Activated naive CD4-positive, alpha-beta T cell treated with anti-CD3 and anti-CD28 coated beads for 36 hours (primary cell): ENCODE measurements at regions of chr10 and their contacts with region 1.

Region 1: GRCh38 chr10:84139126-84140035 is at the start of gene GHITM:
- DNase-seq: peak; percentile 100
- H3K4me3 Mint-ChIP-seq: peak within 1 kb of the TSS; percentile 95
- H3K27ac Mint-ChIP-seq: peak within 1 kb of the TSS; percentile 99
- H3K4me1 Mint-ChIP-seq: peaks cover 36% of the 10 kb centered on the region
- H3K27me3 Mint-ChIP-seq: no peaks in the 10 kb centered on the region
- total RNA-seq, gene GHITM: 281 TPM

Region 2: DNA sequence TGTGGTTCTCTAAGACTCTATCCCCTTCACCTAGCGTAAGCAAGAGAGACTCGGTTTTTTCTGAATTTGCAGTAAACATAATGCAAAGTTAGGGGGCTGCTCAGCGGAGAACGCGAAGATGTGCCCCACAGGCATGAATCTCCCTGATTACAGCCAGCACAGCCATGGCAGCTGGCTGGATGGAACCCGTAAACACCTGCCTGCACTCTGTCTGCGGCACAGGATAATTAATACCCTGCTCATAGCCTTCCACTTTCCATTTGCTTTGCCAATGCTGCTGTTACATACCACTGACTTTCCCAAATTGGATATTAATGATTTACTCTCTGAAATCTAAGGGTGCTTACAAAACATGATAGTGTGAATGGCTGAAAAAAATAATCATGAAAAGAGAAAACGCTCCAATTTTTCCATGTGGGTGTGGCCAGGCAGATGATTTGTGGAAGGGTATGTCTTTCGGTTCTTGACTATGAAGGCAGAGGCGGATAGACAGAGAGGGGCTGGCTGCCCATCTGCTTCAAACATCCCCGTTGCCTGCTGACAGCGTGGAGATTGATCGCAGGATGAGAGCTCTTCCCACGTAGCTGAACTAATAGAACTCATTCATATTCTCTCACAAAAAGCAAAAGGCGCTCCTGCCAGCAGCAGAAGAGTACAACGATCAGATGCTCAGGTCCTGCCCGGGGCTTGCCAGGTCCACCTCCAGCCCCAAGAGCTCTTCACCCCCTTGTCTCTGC is 193.2 kb before region 1 on chr10:
- CTCF ChIA-PET with region 1: no interaction called
- intact Hi-C with region 1: no loop called
- DNase-seq: no peak
- H3K4me3 Mint-ChIP-seq: no peak overlapping the region
- H3K27ac Mint-ChIP-seq: no peak overlapping the region
- H3K4me1 Mint-ChIP-seq: no peaks in the 10 kb centered on the region
- H3K27me3 Mint-ChIP-seq: peaks cover 8% of the 10 kb centered on the region

Region 3: DNA sequence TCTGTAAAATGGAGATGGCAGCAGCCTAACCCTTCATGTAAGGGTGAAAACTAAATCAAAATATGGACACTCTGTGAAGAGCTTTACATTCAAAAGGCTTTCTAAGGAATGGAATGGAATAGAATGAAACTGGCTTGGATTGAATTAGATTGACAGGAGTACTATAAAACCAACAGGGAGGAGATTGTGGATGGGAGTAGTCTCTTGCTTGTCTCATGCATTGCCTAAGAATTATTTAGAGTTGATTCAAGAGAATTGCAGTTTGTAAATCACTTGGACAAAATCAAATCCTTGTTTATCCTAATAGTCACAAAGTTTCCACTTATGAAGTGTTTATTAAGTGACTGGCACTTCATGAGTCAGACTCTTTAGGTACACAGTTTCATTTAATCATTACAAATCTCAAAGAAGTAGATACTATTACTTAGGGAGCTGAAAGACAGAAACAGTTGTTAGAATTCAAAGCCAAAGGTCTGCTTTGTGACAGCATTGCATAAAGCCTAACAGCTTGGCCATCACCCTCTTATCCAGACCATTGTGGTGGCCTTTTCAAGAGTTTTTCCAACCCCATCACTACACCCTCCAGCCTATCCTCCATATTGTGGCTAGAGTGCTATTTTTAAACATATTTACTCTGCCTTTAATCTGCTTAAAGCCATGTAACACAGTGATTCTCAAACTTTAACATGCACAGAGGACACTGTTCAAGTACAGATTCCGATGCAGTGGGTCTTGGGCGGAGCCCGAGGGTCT is 91.9 kb before region 1 on chr10:
- CTCF ChIA-PET with region 1: no interaction called
- intact Hi-C with region 1: no loop called
- DNase-seq: no peak
- H3K4me3 Mint-ChIP-seq: no peak overlapping the region
- H3K27ac Mint-ChIP-seq: no peak overlapping the region
- H3K4me1 Mint-ChIP-seq: no peaks in the 10 kb centered on the region
- H3K27me3 Mint-ChIP-seq: peaks cover 5% of the 10 kb centered on the region

Region 4: GRCh38 chr10:84152769-84153168 is 13.4 kb after region 1 on chr10:
- CTCF ChIA-PET with region 1: interaction called, 28 read pairs
- intact Hi-C with region 1: loop called (anchors 1 kb)
- DNase-seq: no peak
- H3K4me3 Mint-ChIP-seq: no peak overlapping the region
- H3K27ac Mint-ChIP-seq: peak overlapping the region; percentile 79
- H3K4me1 Mint-ChIP-seq: peaks cover 32% of the 10 kb centered on the region
- H3K27me3 Mint-ChIP-seq: no peaks in the 10 kb centered on the region

Region 5: DNA sequence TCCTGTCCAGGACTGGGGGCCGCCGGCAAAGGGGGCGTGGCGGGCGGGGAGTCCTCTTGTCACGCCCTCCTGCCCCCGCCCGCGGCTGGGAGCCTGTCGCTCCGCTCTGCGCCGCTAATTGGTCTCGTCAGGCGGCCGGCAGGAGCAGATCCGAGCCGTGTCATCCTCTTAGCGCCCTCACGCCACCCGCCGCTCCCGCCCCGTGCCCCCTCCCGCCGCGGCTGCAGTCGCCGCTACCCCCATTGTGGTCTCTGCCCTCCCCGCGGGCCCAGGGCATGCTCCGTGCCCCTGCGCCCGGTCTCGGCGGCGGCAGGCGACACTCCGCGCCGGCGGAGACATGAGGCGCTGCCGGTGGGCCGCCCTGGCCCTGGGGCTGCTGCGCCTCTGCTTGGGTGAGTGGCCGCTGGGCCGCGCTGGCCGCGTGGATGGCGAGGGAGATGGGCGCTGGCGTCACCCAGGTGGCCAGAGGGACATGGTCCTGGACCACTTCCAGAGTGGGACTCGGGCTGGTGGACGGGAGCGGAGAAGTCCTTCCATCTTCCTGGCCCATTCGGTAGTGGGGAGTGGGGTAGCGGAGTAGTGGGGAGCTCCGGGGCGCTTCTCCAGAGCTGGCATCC is 55.2 kb after region 1 on chr10 and contains the start of gene CDHR1:
- CTCF ChIA-PET with region 1: interaction called, 3 read pairs
- intact Hi-C with region 1: loop called (anchors 1 kb)
- DNase-seq: peak; percentile 57
- H3K4me3 Mint-ChIP-seq: peak within 1 kb of the TSS; percentile 51
- H3K27ac Mint-ChIP-seq: no peak within 1 kb of the TSS
- H3K4me1 Mint-ChIP-seq: peaks cover 11% of the 10 kb centered on the region
- H3K27me3 Mint-ChIP-seq: peaks cover 12% of the 10 kb centered on the region
- total RNA-seq, gene CDHR1: 0.37 to 1.4 TPM

Region 6: DNA sequence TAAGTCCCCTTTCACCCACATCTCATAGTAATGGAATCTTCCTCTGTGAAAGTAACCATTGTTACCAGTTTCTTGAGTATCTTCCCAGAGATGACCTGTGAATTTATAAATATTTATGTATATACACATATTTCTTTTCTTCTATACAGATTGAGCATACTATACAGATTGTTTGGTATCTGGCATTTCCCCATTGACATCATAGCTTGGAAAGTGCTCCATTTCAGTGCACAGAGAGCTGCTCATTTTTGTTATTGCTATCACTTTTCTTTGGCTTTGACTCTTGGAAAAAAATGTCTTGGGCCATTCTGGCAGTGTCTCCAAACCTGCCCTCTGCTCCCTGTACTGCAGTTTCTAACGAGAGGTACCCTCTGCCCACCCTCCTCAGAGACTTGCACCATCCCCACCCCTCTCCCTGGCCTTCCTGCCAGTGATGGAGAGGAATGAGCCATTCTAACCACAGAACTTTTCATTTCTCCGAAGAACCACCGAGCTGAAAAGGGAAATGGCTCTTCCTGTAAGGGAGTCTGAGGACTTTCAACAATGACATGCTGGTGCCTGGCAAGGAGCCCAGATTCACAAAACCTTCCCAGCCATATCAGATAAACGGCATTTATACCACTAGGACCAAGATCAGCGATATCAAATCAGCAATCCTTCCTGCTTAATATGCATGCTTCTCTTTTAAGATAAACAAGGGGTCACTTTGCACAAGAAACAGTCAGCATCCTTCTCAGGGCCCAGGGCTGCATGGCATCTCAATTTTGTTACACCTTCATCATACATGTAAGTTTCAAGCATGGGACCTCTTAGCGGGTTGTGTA is 169.3 kb after region 1 on chr10:
- CTCF ChIA-PET with region 1: no interaction called
- intact Hi-C with region 1: loop called (anchors 1 kb)
- DNase-seq: peak; percentile 85
- H3K4me3 Mint-ChIP-seq: peak overlapping the region; percentile 42
- H3K27ac Mint-ChIP-seq: peak overlapping the region; percentile 93
- H3K4me1 Mint-ChIP-seq: peaks cover 45% of the 10 kb centered on the region
- H3K27me3 Mint-ChIP-seq: peaks cover 1% of the 10 kb centered on the region